PC-3 (cell line): ENCODE measurements at regions of chr1 and their contacts with region 1.

Region 1: GRCh38 chr1:195939844-195940243 is 668.4 kb downstream of the KCNT2 start:
- DNase-seq: peak; percentile 42
- ATAC-seq: peak; percentile 74
- H3K4me3 ChIP-seq: no peak overlapping the region
- H3K27ac ChIP-seq: no peak overlapping the region
- H3K4me1 ChIP-seq: no peaks in the 10 kb centered on the region
- H3K27me3 ChIP-seq: no peaks in the 10 kb centered on the region
- CTCF ChIP-seq: peak; percentile 52

Region 2: GRCh38 chr1:195754874-195755273 is 185.0 kb before region 1 on chr1:
- CTCF ChIA-PET with region 1: no interaction called
- POLR2A ChIA-PET with region 1: no interaction called
- intact Hi-C with region 1: no loop called
- DNase-seq: no peak
- ATAC-seq: no peak
- H3K4me3 ChIP-seq: no peak overlapping the region
- H3K27ac ChIP-seq: no peak overlapping the region
- H3K4me1 ChIP-seq: no peaks in the 10 kb centered on the region
- H3K27me3 ChIP-seq: no peaks in the 10 kb centered on the region
- CTCF ChIP-seq: no peak

Region 3: GRCh38 chr1:196007785-196008184 is 67.9 kb after region 1 on chr1:
- CTCF ChIA-PET with region 1: no interaction called
- POLR2A ChIA-PET with region 1: no interaction called
- intact Hi-C with region 1: no loop called
- DNase-seq: peak; percentile 47
- ATAC-seq: peak; percentile 60
- H3K4me3 ChIP-seq: no peak overlapping the region
- H3K27ac ChIP-seq: no peak overlapping the region
- H3K4me1 ChIP-seq: peaks cover 23% of the 10 kb centered on the region
- H3K27me3 ChIP-seq: no peaks in the 10 kb centered on the region
- CTCF ChIP-seq: no peak

Region 4: GRCh38 chr1:196034080-196034706 is 94.3 kb after region 1 on chr1:
- CTCF ChIA-PET with region 1: interaction called, 10 read pairs
- POLR2A ChIA-PET with region 1: no interaction called
- intact Hi-C with region 1: loop called (anchors 1 kb)
- DNase-seq: no peak
- ATAC-seq: no peak
- H3K4me3 ChIP-seq: no peak overlapping the region
- H3K27ac ChIP-seq: no peak overlapping the region
- H3K4me1 ChIP-seq: no peaks in the 10 kb centered on the region
- H3K27me3 ChIP-seq: no peaks in the 10 kb centered on the region
- CTCF ChIP-seq: no peak

Region 5: GRCh38 chr1:196148367-196148970 is 208.6 kb after region 1 on chr1:
- CTCF ChIA-PET with region 1: no interaction called
- POLR2A ChIA-PET with region 1: no interaction called
- intact Hi-C with region 1: loop called (anchors 2 kb)
- DNase-seq: peak; percentile 70
- ATAC-seq: peak; percentile 53
- H3K4me3 ChIP-seq: no peak overlapping the region
- H3K27ac ChIP-seq: no peak overlapping the region
- H3K4me1 ChIP-seq: no peaks in the 10 kb centered on the region
- H3K27me3 ChIP-seq: no peaks in the 10 kb centered on the region
- CTCF ChIP-seq: peak; percentile 63